PC-9 (cell line): ENCODE measurements at regions of chr2 and their contacts with region 1.

Region 1: GRCh38 chr2:26345545-26346453 is at the start of gene SELENOI:
- DNase-seq: peak; percentile 98 to 99
- H3K4me3 ChIP-seq: peak within 1 kb of the TSS; percentile 85
- H3K27ac ChIP-seq: peak within 1 kb of the TSS; percentile 84
- H3K4me1 ChIP-seq: peaks cover 42% of the 10 kb centered on the region
- H3K27me3 ChIP-seq: no peaks in the 10 kb centered on the region
- CTCF ChIP-seq: no peak
- total RNA-seq, gene SELENOI: 33.0 and 60.8 TPM in 2 replicates

Region 2: DNA sequence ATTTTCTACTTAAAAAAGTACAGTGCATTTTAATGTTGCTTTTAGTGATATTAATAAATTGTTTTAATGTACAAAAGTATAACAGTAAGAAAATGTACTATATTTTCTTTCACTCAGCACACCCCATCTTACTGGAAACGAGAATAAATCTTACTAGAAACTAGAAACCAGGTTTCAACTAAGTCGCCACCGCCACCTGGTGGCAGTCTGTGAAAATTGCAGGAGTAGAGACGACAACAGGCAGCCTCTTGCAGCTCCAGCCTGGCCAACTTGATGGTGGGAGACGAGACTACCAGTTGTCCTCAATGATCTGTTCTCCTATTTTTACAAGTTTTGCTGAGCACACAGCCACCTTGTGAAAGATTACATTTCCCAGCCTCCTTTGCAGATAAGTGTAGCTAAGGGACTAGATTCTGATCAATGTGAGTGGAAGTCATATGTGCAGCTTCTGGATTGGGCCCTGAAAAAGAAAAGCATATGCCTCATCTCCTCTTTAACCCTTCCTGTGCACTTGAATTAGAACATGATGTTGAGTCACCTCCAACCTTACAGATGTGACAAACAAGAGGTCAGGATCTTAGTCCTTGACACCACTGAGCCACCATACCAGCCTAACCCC is 123.4 kb after region 1 on chr2:
- CTCF ChIA-PET with region 1: no interaction called
- POLR2A ChIA-PET with region 1: interaction called, 4 read pairs
- intact Hi-C with region 1: loop called (anchors 10 kb)
- DNase-seq: peak in 1 of 2 experiments; percentile 53
- H3K4me3 ChIP-seq: no peak overlapping the region
- H3K27ac ChIP-seq: no peak overlapping the region
- H3K4me1 ChIP-seq: 0 out of 2 replicates have a peak, but pooled peaks cover 5% of the 10 kb centered on the region
- H3K27me3 ChIP-seq: no peaks in the 10 kb centered on the region
- CTCF ChIP-seq: peak; percentile 97